ENCODE measurements at regions of chr2 and their contacts with region 1.

Region 1: GRCh38 chr2:219402665-219403515 is 15.2 kb upstream of the DNPEP start:
- DNase-seq: peak; percentile 35 to 81 (median 48)
- ATAC-seq: peak; percentile 99
- H3K4me3 ChIP-seq: no peak overlapping the region
- H3K4me3 Mint-ChIP-seq: no peak overlapping the region
- H3K27ac ChIP-seq: no peak overlapping the region
- H3K27ac Mint-ChIP-seq: no peak overlapping the region
- H3K4me1 ChIP-seq: peaks cover under 1% of the 10 kb centered on the region
- H3K4me1 Mint-ChIP-seq: peaks cover 5% of the 10 kb centered on the region
- H3K27me3 ChIP-seq: peaks cover 0 to 2% of the 10 kb centered on the region in 2 experiments
- H3K27me3 Mint-ChIP-seq: peaks cover 14% of the 10 kb centered on the region
- CTCF ChIP-seq: peak; percentile 92

Region 2: GRCh38 chr2:219206442-219207253 is 196.2 kb before region 1 on chr2 and contains the start of gene ZFAND2B:
- CTCF ChIA-PET with region 1: no interaction called
- POLR2A ChIA-PET with region 1: no interaction called
- intact Hi-C with region 1: no loop called
- DNase-seq: peak; percentile 88 to 98 (median 95)
- ATAC-seq: peak; percentile 93
- H3K4me3 ChIP-seq: peak within 1 kb of the TSS; percentile 69
- H3K4me3 Mint-ChIP-seq: peak within 1 kb of the TSS; percentile 90
- H3K27ac ChIP-seq: peak within 1 kb of the TSS; percentile 89 to 90
- H3K27ac Mint-ChIP-seq: peak within 1 kb of the TSS; percentile 93
- H3K4me1 ChIP-seq: peaks cover 53% of the 10 kb centered on the region
- H3K4me1 Mint-ChIP-seq: peaks cover 47% of the 10 kb centered on the region
- H3K27me3 ChIP-seq: no peaks in the 10 kb centered on the region
- H3K27me3 Mint-ChIP-seq: no peaks in the 10 kb centered on the region
- CTCF ChIP-seq: no peak
- total RNA-seq, gene ZFAND2B: 65.9 to 67.4 TPM

Region 3: GRCh38 chr2:219344751-219345430 is 58.0 kb before region 1 on chr2:
- CTCF ChIA-PET with region 1: no interaction called
- POLR2A ChIA-PET with region 1: no interaction called
- intact Hi-C with region 1: no loop called
- DNase-seq: no peak
- ATAC-seq: no peak
- H3K4me3 ChIP-seq: no peak overlapping the region
- H3K4me3 Mint-ChIP-seq: no peak overlapping the region
- H3K27ac ChIP-seq: no peak overlapping the region
- H3K27ac Mint-ChIP-seq: no peak overlapping the region
- H3K4me1 ChIP-seq: peaks cover 2% of the 10 kb centered on the region
- H3K4me1 Mint-ChIP-seq: no peaks in the 10 kb centered on the region
- H3K27me3 ChIP-seq: peaks cover 0 to 2% of the 10 kb centered on the region in 2 experiments
- H3K27me3 Mint-ChIP-seq: peaks cover 43% of the 10 kb centered on the region
- CTCF ChIP-seq: no peak

Region 4: DNA sequence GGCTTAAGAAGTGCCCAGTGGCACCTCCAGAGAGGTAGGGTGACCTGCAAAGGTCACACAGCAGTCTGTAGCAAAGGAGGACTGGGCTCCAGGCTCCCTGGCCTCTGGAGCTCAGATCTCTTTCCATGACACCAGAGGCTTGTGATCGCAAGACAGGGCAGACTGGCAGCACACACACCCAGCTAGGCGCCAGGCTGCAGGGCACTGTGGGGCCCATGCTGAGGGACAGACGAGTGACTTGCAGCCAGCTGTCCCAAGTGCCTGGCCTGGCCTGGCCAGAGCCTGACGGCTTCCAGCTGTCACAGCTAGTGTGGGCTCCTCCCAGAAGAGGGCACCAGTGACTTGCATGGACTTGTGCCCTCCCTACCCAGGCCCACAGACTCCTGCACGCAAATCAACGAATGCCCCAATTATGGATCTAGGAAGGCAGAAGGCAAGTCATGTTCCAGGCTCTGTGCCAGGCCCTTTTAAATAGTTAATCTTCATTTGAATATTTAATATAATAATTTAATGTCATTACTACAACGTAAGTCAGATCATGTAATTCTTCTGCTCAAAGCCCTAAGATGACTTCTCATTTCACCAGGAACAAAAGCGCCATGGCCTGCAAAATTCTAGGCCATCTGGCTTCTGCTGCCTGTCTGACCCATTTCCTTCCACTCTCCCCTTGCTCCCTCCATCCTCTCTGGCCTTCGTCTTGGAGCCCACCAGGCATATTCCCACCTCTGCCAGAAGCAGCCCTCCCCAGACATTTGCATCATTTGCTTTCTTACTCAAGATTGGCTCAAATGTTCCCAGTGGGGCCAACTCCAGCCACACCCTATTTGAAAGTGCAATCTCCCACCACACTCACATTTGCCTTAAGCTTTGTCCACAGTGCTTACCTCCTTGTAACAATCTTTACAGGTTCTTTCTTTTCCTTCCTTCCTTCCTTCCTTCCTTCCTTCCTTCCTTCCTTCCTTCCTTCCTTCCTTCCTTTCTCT is 28.0 kb after region 1 on chr2:
- CTCF ChIA-PET with region 1: no interaction called
- POLR2A ChIA-PET with region 1: no interaction called
- intact Hi-C with region 1: loop called in 1 of 2 experiments (anchors 1 kb)
- DNase-seq: peak in 2 of 14 experiments; percentile 14 to 27
- ATAC-seq: no peak
- H3K4me3 ChIP-seq: no peak overlapping the region
- H3K4me3 Mint-ChIP-seq: no peak overlapping the region
- H3K27ac ChIP-seq: no peak overlapping the region
- H3K27ac Mint-ChIP-seq: no peak overlapping the region
- H3K4me1 ChIP-seq: peaks cover 10% of the 10 kb centered on the region
- H3K4me1 Mint-ChIP-seq: no peaks in the 10 kb centered on the region
- H3K27me3 ChIP-seq: peaks cover 15 to 24% of the 10 kb centered on the region in 2 experiments
- H3K27me3 Mint-ChIP-seq: peaks cover 40% of the 10 kb centered on the region
- CTCF ChIP-seq: peak; percentile 10

Region 5: DNA sequence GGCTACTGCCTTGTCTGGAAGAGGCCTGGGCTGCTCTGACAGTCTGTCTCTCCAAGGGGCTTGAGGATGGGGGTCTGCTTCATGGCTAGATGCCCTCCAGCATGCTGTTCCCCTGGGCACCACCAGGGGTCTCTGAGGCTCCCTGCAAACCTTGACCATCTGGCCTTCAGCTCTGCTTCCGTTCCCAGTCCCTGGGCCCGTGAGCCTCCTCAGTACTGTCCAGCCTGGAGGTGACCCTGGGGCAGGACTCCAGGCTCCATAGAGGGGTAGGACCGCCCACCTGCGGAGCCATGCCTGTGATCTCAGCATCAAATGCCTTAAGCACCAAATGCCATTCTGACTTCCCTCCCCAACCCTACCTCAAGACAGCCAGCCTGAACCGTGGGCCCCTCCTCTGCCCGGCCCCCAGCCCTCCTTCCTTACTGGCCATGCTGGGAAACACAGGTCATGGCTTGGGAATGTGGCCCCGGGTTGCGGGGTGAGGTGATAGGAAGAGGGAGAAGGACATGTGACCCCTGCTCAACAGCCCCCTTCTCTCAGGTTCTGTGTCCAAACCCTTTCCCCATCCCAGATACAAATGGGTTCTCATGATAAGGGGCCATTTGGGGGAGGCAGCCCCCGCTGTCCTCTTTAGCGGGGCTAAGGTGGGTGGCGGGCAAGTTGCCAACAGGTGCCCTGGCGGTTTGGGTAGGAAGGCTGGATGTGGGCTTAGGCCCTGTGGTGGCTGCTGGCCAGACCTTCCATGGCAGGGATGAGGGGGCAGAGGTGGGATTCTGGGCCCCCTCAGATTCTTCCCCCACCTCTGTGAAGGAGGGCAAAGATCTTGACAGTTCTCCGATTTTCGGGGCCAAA is 56.8 kb after region 1 on chr2:
- CTCF ChIA-PET with region 1: no interaction called
- POLR2A ChIA-PET with region 1: no interaction called
- intact Hi-C with region 1: loop called (anchors 2 to 5 kb)
- DNase-seq: peak in 9 of 14 experiments; percentile 12 to 58 (median 33)
- ATAC-seq: peak; percentile 56
- H3K4me3 ChIP-seq: no peak overlapping the region
- H3K4me3 Mint-ChIP-seq: no peak overlapping the region
- H3K27ac ChIP-seq: no peak overlapping the region
- H3K27ac Mint-ChIP-seq: no peak overlapping the region
- H3K4me1 ChIP-seq: peaks cover 8% of the 10 kb centered on the region
- H3K4me1 Mint-ChIP-seq: peaks cover 6% of the 10 kb centered on the region
- H3K27me3 ChIP-seq: no peaks in the 10 kb centered on the region
- H3K27me3 Mint-ChIP-seq: no peaks in the 10 kb centered on the region
- CTCF ChIP-seq: peak; percentile 75

Region 6: DNA sequence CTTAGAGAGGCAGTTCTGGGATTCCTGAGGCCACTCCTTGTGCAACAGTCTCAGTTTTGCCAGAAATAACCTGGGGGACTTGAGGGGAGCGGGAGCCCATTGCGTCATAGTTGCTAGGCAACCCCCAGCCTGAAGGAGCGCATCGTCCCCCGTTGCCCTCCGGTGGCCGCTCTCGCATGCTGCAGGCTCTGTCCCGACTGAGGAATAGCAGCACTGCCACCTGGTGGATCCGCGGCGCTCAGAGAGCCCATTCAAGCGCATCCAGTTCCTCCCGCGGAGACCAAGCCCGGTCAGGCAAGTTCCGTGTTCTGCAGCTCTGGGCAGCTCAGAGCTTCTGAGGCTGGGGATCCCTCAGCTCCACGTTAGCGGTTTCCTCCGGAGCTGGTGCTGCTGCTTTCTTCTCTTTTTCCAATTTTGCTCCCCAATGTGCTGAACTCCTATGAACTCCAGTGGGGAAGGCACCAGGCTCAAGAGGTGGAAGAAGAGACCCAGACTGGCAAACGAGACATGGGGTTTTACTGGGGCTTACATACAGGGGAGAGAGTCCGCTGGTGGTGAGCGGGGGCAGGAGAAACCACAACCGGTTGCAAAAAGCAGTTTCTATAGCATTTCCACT is 239.7 kb after region 1 on chr2:
- CTCF ChIA-PET with region 1: no interaction called
- POLR2A ChIA-PET with region 1: no interaction called
- intact Hi-C with region 1: loop called (anchors 5 to 10 kb)
- DNase-seq: peak; percentile 78 to 95 (median 84)
- ATAC-seq: peak; percentile 100
- H3K4me3 ChIP-seq: no peak overlapping the region
- H3K4me3 Mint-ChIP-seq: no peak overlapping the region
- H3K27ac ChIP-seq: no peak overlapping the region
- H3K27ac Mint-ChIP-seq: no peak overlapping the region
- H3K4me1 ChIP-seq: peaks cover 13% of the 10 kb centered on the region
- H3K4me1 Mint-ChIP-seq: peaks cover 6% of the 10 kb centered on the region
- H3K27me3 ChIP-seq: peaks cover 0 to 7% of the 10 kb centered on the region in 2 experiments
- H3K27me3 Mint-ChIP-seq: peaks cover 39% of the 10 kb centered on the region
- CTCF ChIP-seq: peak; percentile 99